Naive thymus-derived CD4-positive, alpha-beta T cell (primary cell): ENCODE measurements at regions of chr17 and their contacts with region 1.

Region 1: DNA sequence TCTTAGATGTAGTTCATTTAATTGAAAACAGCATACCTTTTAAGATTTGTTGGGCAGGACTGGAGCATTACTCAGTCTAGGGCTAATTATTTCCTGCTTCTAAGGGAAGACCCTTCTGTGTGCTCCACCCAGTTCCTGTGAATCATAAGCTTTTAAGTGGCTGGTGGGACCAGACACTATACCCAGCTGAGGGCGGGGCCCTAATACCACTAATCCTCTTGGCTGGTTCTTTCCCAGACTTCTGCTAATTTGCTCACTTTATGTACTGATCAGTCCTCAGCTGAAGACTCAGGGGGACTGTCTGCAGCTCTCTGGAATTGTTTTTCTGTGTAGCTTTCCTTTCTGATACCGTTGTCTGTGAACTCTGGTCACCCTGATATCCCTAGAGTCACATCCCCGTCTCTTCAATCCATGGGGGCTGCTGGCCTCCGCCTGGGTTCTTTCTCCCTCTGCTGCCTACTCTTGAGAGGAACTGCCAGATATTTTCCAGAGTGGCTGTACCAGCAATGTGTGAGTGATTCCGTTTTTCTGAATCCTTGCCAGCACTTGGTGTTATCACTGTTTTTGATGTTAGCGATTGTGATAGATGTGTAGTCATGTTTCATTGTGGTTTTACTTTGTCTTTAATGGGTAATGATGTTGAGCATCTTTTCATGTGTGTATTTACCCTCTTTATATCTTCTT is 35.1 kb downstream of the MFSD11 start:
- DNase-seq: peak in 6 of 9 donors; percentile 2 to 33 (median 22)
- ATAC-seq: peak; percentile 94
- H3K4me3 ChIP-seq: peak overlapping the region; percentile 36
- H3K4me3 Mint-ChIP-seq: peak overlapping the region in 9 of 10 donors; percentile 30 to 82 (median 48)
- H3K27ac ChIP-seq: no peak overlapping the region
- H3K27ac Mint-ChIP-seq: peak overlapping the region; percentile 67 to 92 (median 82)
- H3K4me1 ChIP-seq: peaks cover 11 to 13% of the 10 kb centered on the region in 2 donors
- H3K4me1 Mint-ChIP-seq: peaks cover 15 to 25% (median 23%) of the 10 kb centered on the region in 7 donors
- H3K27me3 ChIP-seq: no peaks in the 10 kb centered on the region
- H3K27me3 Mint-ChIP-seq: no peaks in the 10 kb centered on the region

Region 2: DNA sequence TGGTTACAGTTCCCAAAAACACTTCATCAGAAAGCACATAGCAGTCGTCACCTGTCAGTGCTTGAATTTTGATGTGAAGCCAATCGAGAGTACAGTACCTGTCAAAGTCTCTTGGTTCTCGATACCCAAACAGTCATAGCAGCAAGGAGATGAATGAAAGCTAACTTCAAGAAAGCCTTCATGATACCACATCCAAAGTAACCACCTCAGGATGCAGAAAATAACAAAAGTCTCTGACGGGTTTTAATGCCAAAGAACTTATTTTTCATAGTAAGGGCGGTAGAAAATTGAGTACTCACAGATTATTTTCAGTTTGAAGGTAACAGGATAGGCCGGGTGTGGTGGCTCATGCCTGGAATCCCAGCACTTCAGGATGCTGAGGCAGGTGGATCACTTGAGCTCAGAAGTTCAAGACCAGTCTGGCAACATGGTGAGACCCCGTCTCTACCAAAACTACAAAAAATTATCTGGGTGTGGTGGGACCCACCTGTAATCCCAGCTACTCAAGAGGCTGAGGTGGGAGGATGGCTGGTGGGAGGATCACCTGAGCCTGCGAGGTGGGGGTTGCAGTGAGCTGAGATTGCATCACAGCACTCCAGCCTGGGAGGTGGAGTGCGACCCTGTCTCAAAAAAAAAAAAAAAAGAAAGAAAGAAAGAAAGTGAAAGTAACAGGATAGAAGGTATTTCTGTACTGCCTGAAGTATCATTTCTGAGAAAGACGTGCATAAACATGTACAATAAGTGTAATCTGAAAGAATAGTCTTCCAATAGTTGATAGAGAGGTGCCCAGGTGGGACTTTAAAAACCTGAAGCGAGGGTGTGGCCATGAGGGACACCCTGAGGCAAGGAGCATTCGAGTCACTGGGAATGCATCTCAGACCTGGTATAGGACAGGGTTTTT is 19.7 kb before region 1 on chr17:
- CTCF ChIA-PET with region 1: interaction called, 5 read pairs
- POLR2A ChIA-PET with region 1: no interaction called
- intact Hi-C with region 1: loop called in 1 of 2 experiments (anchors 2 kb)
- DNase-seq: peak in 8 of 9 donors; percentile 18 to 93 (median 86)
- ATAC-seq: peak; percentile 93
- H3K4me3 ChIP-seq: peak overlapping the region; percentile 55
- H3K4me3 Mint-ChIP-seq: peak overlapping the region; percentile 84 to 91 (median 89)
- H3K27ac ChIP-seq: peak overlapping the region; percentile 83
- H3K27ac Mint-ChIP-seq: peak overlapping the region; percentile 96 to 99 (median 99)
- H3K4me1 ChIP-seq: peaks cover 14 to 20% of the 10 kb centered on the region in 2 donors
- H3K4me1 Mint-ChIP-seq: peaks cover 19 to 30% (median 28%) of the 10 kb centered on the region in 7 donors
- H3K27me3 ChIP-seq: no peaks in the 10 kb centered on the region
- H3K27me3 Mint-ChIP-seq: no peaks in the 10 kb centered on the region